ENCODE measurements at regions of chr12 and their contacts with region 1.

Region 1: GRCh38 chr12:55940065-55940732 is 9.2 kb downstream of the DGKA start:
- H3K4me3 ChIP-seq: no peak overlapping the region
- H3K27ac ChIP-seq: no peak overlapping the region
- H3K4me1 ChIP-seq: no peaks in the 10 kb centered on the region
- CTCF ChIP-seq: peak; percentile 91

Region 2: GRCh38 chr12:55817346-55818139 is 122.7 kb before region 1 on chr12 and contains the starts of genes ORMDL2 and SARNP:
- CTCF ChIA-PET with region 1: interaction called, 13 read pairs
- POLR2A ChIA-PET with region 1: interaction called, 3 read pairs
- H3K4me3 ChIP-seq: peak within 1 kb of the TSS; percentile 83
- H3K27ac ChIP-seq: peak within 1 kb of the TSS; percentile 72
- H3K4me1 ChIP-seq: peaks cover 6% of the 10 kb centered on the region; the same call in 1 of the 2 replicates
- CTCF ChIP-seq: no peak

Region 3: GRCh38 chr12:55955800-55956508 is 15.8 kb after region 1 on chr12:
- CTCF ChIA-PET with region 1: interaction called, 21 read pairs
- POLR2A ChIA-PET with region 1: no interaction called
- H3K4me3 ChIP-seq: no peak overlapping the region
- H3K27ac ChIP-seq: no peak overlapping the region
- H3K4me1 ChIP-seq: no peaks in the 10 kb centered on the region
- CTCF ChIP-seq: peak; percentile 50

Region 4: DNA sequence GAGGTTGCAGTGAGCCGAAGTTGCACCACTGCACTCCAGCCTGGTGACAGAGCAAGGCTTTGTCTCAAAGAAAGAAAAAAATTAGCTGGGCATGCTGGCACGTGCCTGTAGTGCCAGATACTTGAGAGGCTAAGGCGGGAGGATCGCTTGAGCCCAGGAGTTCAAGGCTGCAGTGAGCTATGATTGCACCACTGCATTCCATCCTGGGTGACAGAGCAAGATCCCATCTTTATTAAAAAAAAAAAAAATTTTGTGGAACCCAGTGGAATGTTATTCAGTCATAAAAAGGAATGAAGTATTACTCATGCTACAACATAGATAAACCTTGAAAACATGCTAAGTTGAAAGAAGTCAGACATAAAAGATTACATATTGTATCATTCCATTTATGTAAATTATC is 131.4 kb after region 1 on chr12:
- CTCF ChIA-PET with region 1: interaction called, 11 read pairs
- POLR2A ChIA-PET with region 1: no interaction called
- H3K4me3 ChIP-seq: no peak overlapping the region
- H3K27ac ChIP-seq: no peak overlapping the region
- H3K4me1 ChIP-seq: no peaks in the 10 kb centered on the region
- CTCF ChIP-seq: no peak